Common myeloid progenitor, CD34-positive (primary cell): ENCODE measurements at regions of chr1 and their contacts with region 1.

Region 1: DNA sequence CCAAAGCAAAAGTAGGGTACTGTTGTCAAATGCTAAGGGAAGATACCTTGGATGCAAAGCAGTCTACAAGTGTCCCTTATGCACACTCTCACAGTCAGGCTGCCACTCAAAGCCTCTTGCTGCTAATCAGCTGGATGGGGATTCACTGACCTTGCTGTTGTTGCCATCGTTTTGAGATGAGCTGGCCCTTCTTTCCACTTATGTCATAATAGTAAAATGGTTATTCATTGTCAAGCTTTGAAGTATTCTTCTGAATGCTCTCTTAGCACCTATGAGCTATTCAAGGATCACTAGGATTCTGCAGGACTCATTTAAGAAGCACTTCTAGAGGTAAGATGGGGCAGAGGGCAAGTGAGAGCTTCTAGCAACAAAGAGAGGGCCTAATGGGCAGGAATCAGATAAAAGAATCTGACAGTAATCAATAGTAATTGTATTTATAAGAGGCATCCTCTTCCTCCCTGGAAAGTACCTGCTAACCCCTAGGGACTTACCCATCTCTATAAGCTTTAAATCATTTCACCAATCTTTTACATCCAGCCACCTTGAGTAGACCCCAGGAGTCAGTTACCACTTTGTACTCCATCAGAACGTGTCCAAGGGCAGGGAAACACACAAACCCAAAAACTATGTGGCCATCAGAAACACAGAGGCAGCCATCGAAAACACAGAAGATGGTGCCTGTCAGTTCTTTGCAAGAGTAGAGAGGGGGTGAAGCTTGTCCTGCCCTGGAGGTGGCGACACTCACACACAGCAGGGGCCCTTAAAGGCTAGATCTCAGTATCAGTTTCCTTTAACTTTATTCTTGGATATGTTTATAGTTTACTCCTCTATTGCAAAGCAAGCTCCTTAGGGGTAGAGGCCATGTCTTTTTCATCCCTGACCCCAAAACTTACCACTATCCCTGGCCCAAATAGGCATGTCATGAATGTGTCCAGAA is 103.7 kb upstream of the NFIA start:
- DNase-seq: peak; percentile 61 to 83 (median 79)
- H3K4me3 ChIP-seq: no peak overlapping the region
- H3K27ac ChIP-seq: no peak overlapping the region
- H3K4me1 ChIP-seq: no peaks in the 10 kb centered on the region
- H3K27me3 ChIP-seq: no peaks in the 10 kb centered on the region

Region 2: GRCh38 chr1:60949154-60949825 is 29.4 kb before region 1 on chr1:
- CTCF ChIA-PET with region 1: interaction called, 11 read pairs
- POLR2A ChIA-PET with region 1: no interaction called
- DNase-seq: peak; percentile 83 to 98 (median 97)
- H3K4me3 ChIP-seq: peak overlapping the region in 3 of 7 experiments; percentile 21 to 32 (median 24)
- H3K27ac ChIP-seq: no peak overlapping the region
- H3K4me1 ChIP-seq: peaks cover 17 to 27% (median 20%) of the 10 kb centered on the region in 4 experiments
- H3K27me3 ChIP-seq: no peaks in the 10 kb centered on the region

Region 3: DNA sequence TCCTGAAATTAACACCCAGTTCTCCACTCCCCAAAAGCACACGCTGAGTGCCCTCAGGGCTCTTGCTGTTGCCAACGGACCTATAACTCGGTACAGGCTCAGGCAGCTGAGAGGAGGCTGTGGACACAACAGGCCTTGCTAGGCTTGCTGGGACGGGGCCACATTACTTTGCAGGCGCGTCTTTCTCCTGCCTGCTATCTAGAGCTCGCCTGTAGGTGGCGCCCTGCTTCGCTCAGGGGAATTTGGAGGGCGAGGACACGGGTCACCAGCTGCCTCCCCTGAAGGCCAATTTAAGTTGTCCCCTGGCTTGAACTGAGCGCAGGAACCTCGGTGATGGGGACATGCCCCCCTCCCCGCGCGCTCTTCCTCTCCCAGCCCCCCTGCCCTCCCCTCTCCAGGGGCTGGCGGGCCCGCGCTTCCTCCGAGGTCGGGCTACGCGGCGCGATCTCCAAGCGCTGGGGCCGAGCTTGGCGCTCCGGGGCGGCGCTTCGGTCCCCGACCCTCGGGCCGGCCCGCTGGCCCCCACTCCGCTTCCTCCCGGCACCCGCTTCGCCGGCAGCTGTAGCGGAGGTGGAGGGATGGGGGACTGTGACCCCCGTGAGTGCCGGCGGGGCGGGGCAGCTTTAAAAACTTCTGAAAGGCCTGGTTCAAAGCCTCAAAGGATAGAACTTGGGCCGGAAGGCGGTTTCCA is 71.3 kb after region 1 on chr1:
- CTCF ChIA-PET with region 1: interaction called, 164 read pairs
- POLR2A ChIA-PET with region 1: no interaction called
- DNase-seq: peak; percentile 95 to 99 (median 98)
- H3K4me3 ChIP-seq: peak overlapping the region; percentile 55 to 91 (median 75)
- H3K27ac ChIP-seq: peak overlapping the region; percentile 58 to 81
- H3K4me1 ChIP-seq: peaks cover 14 to 46% (median 42%) of the 10 kb centered on the region in 4 experiments
- H3K27me3 ChIP-seq: peaks cover 0 to 13% (median 0%) of the 10 kb centered on the region in 5 experiments

Region 4: DNA sequence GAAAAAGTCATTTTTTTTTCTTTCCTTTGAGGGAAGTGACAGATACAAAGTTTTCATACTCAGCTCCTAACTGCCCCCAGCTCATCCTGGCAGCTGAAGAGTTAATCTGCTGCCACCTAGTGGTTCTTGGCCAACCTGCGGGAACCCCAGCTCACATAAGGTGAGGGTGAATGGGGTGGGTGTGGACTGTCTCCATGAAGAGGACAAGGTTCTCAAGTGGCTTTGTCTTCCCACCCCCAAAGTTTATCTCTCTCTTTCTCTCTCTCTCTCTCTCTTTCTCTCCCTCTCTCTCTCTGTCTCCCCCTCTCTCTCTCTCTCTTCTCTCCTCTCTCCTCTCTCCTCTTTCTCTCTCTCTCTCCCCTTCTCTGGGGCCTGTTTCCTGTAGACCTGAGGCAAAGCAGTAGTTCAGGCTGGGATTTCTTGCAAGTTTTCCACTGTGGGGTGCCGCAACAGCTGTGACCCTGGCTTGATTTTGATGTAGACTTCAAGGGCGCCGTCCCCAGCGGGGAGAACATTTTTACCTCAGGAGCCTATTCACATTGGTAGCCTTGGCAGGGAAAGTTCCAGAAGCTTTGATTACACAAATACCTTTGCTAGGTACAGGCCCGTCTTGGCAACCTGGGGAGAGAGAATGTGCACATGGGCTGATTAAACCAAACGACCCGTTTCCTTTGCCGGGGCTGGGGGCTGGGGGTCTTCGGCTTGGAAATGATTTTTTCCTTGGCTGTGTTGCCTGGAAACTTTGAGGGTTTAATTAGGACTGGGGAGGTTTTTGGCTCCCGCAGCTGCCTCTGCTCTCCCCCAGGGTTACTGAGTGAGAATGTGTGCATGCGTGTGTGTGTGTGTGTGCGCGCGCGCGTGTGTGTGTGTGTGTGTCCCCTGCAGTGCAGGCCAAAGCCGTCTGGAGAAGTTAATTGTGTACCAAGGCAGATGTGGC is 610.3 kb after region 1 on chr1:
- CTCF ChIA-PET with region 1: interaction called, 11 read pairs
- POLR2A ChIA-PET with region 1: no interaction called
- DNase-seq: peak; percentile 69 to 80 (median 76)
- H3K4me3 ChIP-seq: peak overlapping the region in 1 of 7 experiments; percentile 23
- H3K27ac ChIP-seq: no peak overlapping the region
- H3K4me1 ChIP-seq: peaks cover 0 to 5% (median 0%) of the 10 kb centered on the region in 4 experiments
- H3K27me3 ChIP-seq: peaks cover 0 to 2% (median 0%) of the 10 kb centered on the region in 5 experiments

Region 5: GRCh38 chr1:61851849-61852669 is 873.4 kb after region 1 on chr1:
- CTCF ChIA-PET with region 1: interaction called, 17 read pairs
- POLR2A ChIA-PET with region 1: no interaction called
- DNase-seq: peak; percentile 71 to 86 (median 80)
- H3K4me3 ChIP-seq: no peak overlapping the region
- H3K27ac ChIP-seq: no peak overlapping the region
- H3K4me1 ChIP-seq: no peaks in the 10 kb centered on the region
- H3K27me3 ChIP-seq: no peaks in the 10 kb centered on the region